Body of pancreas (tissue), 4 donors: ENCODE measurements at regions of chr14 and their contacts with region 1.

Region 1: DNA sequence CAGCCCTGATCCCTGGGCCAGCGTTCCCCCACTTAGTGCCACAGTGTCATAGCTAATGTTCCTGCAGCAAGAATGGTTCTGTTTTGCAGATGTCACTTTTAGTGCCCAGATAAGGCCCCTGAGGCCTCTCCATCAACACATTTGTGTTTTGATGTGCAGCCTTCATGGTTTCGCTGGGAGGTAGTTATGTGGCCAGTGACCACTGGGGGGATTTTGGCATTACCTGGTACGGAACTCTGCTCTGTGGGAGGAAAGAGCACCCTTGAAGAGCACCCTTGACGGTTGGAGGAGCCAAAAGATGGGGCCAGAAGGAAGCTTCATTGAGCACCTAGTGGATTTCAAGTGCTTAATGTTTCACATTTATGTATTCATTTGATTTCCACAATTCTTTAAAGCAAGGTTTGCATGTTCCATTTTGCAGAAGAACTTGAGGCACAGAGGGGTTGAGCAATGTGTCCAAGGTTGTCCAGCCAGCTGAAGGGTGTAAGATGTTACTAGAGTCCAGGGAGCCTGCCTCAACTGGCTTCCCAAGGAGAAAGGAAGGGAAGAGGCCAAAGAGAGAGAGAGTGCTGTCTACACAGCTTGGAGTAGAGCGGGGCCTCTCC is 13.0 kb downstream of the SERPINA11 start:
- DNase-seq: no peak
- ATAC-seq: no peak
- H3K4me3 ChIP-seq: no peak overlapping the region
- H3K27ac ChIP-seq: no peak overlapping the region
- H3K4me1 ChIP-seq: no peaks in the 10 kb centered on the region
- H3K27me3 ChIP-seq: no peaks in the 10 kb centered on the region
- CTCF ChIP-seq: no peak
- POLR2A ChIP-seq: no peak

Region 2: GRCh38 chr14:94548999-94549985 is 109.7 kb after region 1 on chr14:
- intact Hi-C with region 1: loop called (anchors 5 kb)
- DNase-seq: peak; percentile 48 to 75 (median 67)
- ATAC-seq: peak; percentile 85
- H3K4me3 ChIP-seq: no peak overlapping the region
- H3K27ac ChIP-seq: no peak overlapping the region
- H3K4me1 ChIP-seq: no peaks in the 10 kb centered on the region
- H3K27me3 ChIP-seq: no peaks in the 10 kb centered on the region
- CTCF ChIP-seq: peak; percentile 69 to 93 (median 73)
- POLR2A ChIP-seq: no peak

Region 3: DNA sequence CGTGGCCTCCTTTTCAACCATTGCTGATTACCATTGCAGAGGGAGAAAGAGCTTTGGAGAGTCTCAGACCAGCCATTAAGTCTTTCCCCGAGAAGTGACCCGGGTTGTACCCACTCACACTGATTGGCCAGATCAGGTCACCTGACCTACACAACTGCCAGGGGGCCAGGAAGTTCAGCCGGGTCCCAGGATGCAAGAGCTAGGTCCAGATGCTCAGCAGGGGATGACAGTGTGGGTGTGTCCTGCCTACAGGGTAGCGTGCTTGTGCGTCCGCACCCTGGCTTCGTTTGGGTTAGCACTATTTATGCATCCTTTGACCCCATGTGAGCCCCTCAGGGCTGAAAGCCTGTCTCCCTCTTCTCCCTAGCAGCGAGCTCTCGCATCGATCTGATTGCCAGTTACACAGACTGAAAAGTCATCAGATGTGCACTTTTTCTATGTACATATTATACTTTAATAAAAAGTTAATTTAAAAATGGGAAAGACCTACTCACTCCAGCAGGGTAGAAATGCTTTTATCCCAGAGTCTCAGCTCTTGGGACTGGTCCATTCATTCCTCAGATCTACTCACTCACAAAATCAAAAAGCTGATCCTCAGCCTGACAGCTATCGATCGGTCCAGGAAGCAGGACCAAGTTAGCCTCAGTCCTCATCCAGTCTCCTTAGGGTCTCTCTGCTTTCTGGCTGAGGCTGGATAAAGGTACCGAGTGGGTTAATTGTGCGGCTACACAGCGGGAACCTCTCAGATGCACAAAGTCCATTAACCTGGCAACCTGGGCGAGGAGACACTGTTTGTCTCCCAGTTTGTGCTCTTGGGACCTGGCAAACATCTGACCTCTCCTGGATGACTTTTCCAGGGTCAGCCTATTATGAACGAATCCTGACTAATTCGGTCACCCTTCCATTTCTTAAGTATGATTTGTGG is 240.6 kb after region 1 on chr14:
- intact Hi-C with region 1: loop called (anchors 5 kb)
- DNase-seq: no peak
- ATAC-seq: no peak
- H3K4me3 ChIP-seq: no peak overlapping the region
- H3K27ac ChIP-seq: no peak overlapping the region
- H3K4me1 ChIP-seq: no peaks in the 10 kb centered on the region
- H3K27me3 ChIP-seq: no peaks in the 10 kb centered on the region
- CTCF ChIP-seq: no peak
- POLR2A ChIP-seq: no peak